ENCODE measurements at regions of chr1 and their contacts with region 1.

Region 1: GRCh38 chr1:110524311-110525251 is 5.6 kb upstream of the KCNA10 start:
- DNase-seq: peak; percentile 27
- ATAC-seq: peak; percentile 96
- H3K4me3 ChIP-seq: peak overlapping the region in 1 of 2 experiments; percentile 10; a peak in 1 of 4 replicates
- H3K27ac ChIP-seq: no peak overlapping the region
- H3K4me1 ChIP-seq: peaks cover 0 to 8% of the 10 kb centered on the region in 2 experiments; a peak in 1 of 4 replicates
- H3K27me3 ChIP-seq: peaks cover 59% of the 10 kb centered on the region; the same call in 1 of the 2 replicates
- CTCF ChIP-seq: peak; percentile 77 to 88 (median 84)
- POLR2A ChIP-seq: no peak
- RAD21 ChIP-seq: peak; percentile 87

Region 2: DNA sequence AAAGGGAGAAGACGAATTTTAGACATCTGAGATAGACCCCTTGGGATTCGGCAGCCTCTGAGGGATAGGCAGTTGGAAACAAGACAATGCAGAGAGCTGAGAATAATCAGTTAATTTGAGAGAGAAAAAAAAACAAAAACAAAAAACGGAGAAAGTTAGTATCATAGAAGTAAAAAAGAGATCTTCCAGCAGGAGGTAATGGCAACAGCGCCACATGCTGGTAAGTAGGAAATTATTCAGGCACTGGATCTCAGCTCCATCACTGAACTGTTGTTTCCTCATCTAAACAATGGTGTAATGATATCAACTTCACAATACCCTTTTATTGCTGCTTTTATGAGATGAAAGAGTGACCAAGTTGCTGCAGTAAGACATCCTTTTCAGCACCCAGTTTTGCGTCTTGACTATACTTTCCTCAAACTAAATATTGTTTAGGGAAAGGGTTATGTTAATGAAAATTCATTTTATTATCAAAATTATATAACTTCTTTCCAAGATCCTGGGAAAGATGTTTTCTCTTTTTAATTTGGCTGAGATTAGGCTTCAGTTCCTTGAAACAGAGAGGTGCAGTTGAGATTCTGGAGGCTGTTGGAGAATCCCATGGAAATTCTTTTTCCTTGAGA is 241.6 kb after region 1 on chr1:
- CTCF ChIA-PET with region 1: interaction called, 10 read pairs
- POLR2A ChIA-PET with region 1: no interaction called
- RAD21 ChIA-PET with region 1: no interaction called
- intact Hi-C with region 1: loop called (anchors 5 kb)
- DNase-seq: peak; percentile 10
- ATAC-seq: peak; percentile 68; the same call in 1 of the 2 replicates
- H3K4me3 ChIP-seq: no peak overlapping the region
- H3K27ac ChIP-seq: no peak overlapping the region
- H3K4me1 ChIP-seq: no peaks in the 10 kb centered on the region
- H3K27me3 ChIP-seq: peaks cover 67% of the 10 kb centered on the region
- CTCF ChIP-seq: peak; percentile 61 to 82 (median 75); a peak in 5 of 6 replicates
- POLR2A ChIP-seq: no peak
- RAD21 ChIP-seq: peak; percentile 73

Region 3: DNA sequence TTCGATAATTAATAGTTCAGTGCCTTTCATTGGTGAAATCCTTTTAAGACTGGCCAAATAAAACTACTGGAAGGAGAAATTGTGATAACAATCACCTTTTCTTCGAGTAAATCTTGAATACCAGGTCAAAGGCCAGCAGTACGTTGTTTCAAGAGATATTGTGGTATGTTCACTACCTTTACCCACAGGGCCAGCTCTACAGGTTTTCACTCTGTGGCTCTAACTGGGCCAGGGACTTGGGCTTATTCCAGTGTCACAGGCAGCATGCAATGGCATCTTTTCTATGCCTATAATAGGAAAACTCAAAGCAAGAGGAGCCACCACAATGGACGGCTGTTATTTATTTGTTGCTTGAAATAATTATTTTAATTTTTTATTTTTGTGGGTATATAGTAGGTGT is 466.0 kb after region 1 on chr1:
- CTCF ChIA-PET with region 1: no interaction called
- POLR2A ChIA-PET with region 1: no interaction called
- RAD21 ChIA-PET with region 1: no interaction called
- intact Hi-C with region 1: loop called (anchors 2 kb)
- DNase-seq: no peak
- ATAC-seq: no peak
- H3K4me3 ChIP-seq: no peak overlapping the region
- H3K27ac ChIP-seq: no peak overlapping the region
- H3K4me1 ChIP-seq: no peaks in the 10 kb centered on the region
- H3K27me3 ChIP-seq: peaks cover 23% of the 10 kb centered on the region
- CTCF ChIP-seq: no peak
- POLR2A ChIP-seq: no peak
- RAD21 ChIP-seq: no peak